ENCODE measurements at regions of chr6 and their contacts with region 1.

Region 1: DNA sequence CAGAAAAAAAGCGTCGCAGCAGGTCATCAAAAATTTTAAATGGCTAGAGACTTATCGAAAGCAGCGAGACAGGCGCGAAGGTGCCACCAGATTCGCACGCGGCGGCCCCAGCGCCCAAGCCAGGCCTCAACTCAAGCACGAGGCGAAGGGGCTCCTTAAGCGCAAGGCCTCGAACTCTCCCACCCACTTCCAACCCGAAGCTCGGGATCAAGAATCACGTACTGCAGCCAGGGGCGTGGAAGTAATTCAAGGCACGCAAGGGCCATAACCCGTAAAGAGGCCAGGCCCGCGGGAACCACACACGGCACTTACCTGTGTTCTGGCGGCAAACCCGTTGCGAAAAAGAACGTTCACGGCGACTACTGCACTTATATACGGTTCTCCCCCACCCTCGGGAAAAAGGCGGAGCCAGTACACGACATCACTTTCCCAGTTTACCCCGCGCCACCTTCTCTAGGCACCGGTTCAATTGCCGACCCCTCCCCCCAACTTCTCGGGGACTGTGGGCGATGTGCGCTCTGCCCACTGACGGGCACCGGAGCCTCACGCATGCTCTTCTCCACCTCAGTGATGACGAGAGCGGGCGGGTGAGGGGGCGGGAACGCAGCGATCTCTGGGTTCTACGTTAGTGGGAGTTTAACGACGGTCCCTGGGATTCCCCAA is at the start of gene EEF1A1:
- DNase-seq: peak; percentile 91
- ATAC-seq: peak; percentile 79
- H3K4me3 Mint-ChIP-seq: peak within 1 kb of the TSS; percentile 96
- H3K27ac Mint-ChIP-seq: peak within 1 kb of the TSS; percentile 98
- H3K4me1 Mint-ChIP-seq: peaks cover 65% of the 10 kb centered on the region
- H3K27me3 Mint-ChIP-seq: no peaks in the 10 kb centered on the region
- CTCF ChIP-seq: no peak
- total RNA-seq, gene EEF1A1: 19,962 and 22,096 TPM in 2 replicates

Region 2: GRCh38 chr6:72286911-72287311 is 1233.9 kb before region 1 on chr6:
- CTCF ChIA-PET with region 1: no interaction called
- POLR2A ChIA-PET with region 1: no interaction called
- intact Hi-C with region 1: no loop called
- DNase-seq: no peak
- ATAC-seq: no peak
- H3K4me3 Mint-ChIP-seq: no peak overlapping the region
- H3K27ac Mint-ChIP-seq: no peak overlapping the region
- H3K4me1 Mint-ChIP-seq: no peaks in the 10 kb centered on the region
- H3K27me3 Mint-ChIP-seq: no peaks in the 10 kb centered on the region
- CTCF ChIP-seq: no peak

Region 3: GRCh38 chr6:72894091-72894490 is 626.7 kb before region 1 on chr6:
- CTCF ChIA-PET with region 1: no interaction called
- POLR2A ChIA-PET with region 1: no interaction called
- intact Hi-C with region 1: no loop called
- DNase-seq: no peak
- ATAC-seq: no peak
- H3K4me3 Mint-ChIP-seq: no peak overlapping the region
- H3K27ac Mint-ChIP-seq: no peak overlapping the region
- H3K4me1 Mint-ChIP-seq: no peaks in the 10 kb centered on the region
- H3K27me3 Mint-ChIP-seq: no peaks in the 10 kb centered on the region
- CTCF ChIP-seq: no peak

Region 4: GRCh38 chr6:73471686-73472290 is 49.0 kb before region 1 on chr6:
- CTCF ChIA-PET with region 1: no interaction called
- POLR2A ChIA-PET with region 1: interaction called, 18 read pairs
- intact Hi-C with region 1: no loop called
- DNase-seq: no peak
- ATAC-seq: peak; percentile 95
- H3K4me3 Mint-ChIP-seq: peak overlapping the region; percentile 75
- H3K27ac Mint-ChIP-seq: peak overlapping the region; percentile 90
- H3K4me1 Mint-ChIP-seq: peaks cover 25% of the 10 kb centered on the region
- H3K27me3 Mint-ChIP-seq: no peaks in the 10 kb centered on the region
- CTCF ChIP-seq: no peak

Region 5: GRCh38 chr6:73560853-73561407 is 40.1 kb after region 1 on chr6:
- CTCF ChIA-PET with region 1: no interaction called
- POLR2A ChIA-PET with region 1: interaction called, 7 read pairs
- intact Hi-C with region 1: loop called (anchors 1 kb)
- DNase-seq: no peak
- ATAC-seq: peak; percentile 45
- H3K4me3 Mint-ChIP-seq: peak overlapping the region; percentile 25
- H3K27ac Mint-ChIP-seq: peak overlapping the region; percentile 38
- H3K4me1 Mint-ChIP-seq: peaks cover 13% of the 10 kb centered on the region
- H3K27me3 Mint-ChIP-seq: no peaks in the 10 kb centered on the region
- CTCF ChIP-seq: no peak

Region 6: DNA sequence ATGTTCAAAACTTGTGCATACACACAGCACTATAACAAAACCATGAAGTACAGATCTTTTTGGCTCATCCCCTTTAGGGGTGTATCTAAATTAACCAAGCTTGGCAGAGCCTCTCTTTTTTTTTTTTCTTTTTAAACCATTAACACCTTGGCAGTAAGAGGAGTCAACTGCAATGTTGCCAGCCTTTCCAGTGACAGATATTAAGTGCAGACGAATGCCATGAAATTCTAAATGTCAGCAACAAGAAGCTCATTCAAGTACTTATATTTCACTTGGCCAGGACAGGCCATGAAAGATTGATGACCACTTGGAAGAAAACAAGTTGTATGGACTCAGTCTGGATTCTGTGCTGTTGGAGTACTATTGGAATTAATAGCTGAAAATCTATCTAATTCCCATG is 83.2 kb after region 1 on chr6:
- CTCF ChIA-PET with region 1: interaction called, 64 read pairs
- POLR2A ChIA-PET with region 1: interaction called, 86 read pairs
- intact Hi-C with region 1: no loop called
- DNase-seq: no peak
- ATAC-seq: no peak
- H3K4me3 Mint-ChIP-seq: no peak overlapping the region
- H3K27ac Mint-ChIP-seq: no peak overlapping the region
- H3K4me1 Mint-ChIP-seq: no peaks in the 10 kb centered on the region
- H3K27me3 Mint-ChIP-seq: no peaks in the 10 kb centered on the region
- CTCF ChIP-seq: no peak

Region 7: GRCh38 chr6:75243333-75244062 is 1722.7 kb after region 1 on chr6 and contains the start of gene COX7A2:
- CTCF ChIA-PET with region 1: no interaction called
- POLR2A ChIA-PET with region 1: interaction called, 5 read pairs
- intact Hi-C with region 1: loop called (anchors 5 kb)
- DNase-seq: peak; percentile 77
- ATAC-seq: peak; percentile 97
- H3K4me3 Mint-ChIP-seq: peak within 1 kb of the TSS; percentile 94
- H3K27ac Mint-ChIP-seq: peak within 1 kb of the TSS; percentile 95
- H3K4me1 Mint-ChIP-seq: peaks cover 21% of the 10 kb centered on the region
- H3K27me3 Mint-ChIP-seq: peaks cover 13% of the 10 kb centered on the region
- CTCF ChIP-seq: no peak
- total RNA-seq, gene COX7A2: 259 and 301 TPM in 2 replicates